Activated CD8-positive, alpha-beta T cell treated with anti-CD3 and anti-CD28 coated beads, Interleukin-2, amount 10 ng/mL, durations not matched to agents 7 days and 5 days (primary cell): ENCODE measurements at regions of chr4 and their contacts with region 1.

Region 1: DNA sequence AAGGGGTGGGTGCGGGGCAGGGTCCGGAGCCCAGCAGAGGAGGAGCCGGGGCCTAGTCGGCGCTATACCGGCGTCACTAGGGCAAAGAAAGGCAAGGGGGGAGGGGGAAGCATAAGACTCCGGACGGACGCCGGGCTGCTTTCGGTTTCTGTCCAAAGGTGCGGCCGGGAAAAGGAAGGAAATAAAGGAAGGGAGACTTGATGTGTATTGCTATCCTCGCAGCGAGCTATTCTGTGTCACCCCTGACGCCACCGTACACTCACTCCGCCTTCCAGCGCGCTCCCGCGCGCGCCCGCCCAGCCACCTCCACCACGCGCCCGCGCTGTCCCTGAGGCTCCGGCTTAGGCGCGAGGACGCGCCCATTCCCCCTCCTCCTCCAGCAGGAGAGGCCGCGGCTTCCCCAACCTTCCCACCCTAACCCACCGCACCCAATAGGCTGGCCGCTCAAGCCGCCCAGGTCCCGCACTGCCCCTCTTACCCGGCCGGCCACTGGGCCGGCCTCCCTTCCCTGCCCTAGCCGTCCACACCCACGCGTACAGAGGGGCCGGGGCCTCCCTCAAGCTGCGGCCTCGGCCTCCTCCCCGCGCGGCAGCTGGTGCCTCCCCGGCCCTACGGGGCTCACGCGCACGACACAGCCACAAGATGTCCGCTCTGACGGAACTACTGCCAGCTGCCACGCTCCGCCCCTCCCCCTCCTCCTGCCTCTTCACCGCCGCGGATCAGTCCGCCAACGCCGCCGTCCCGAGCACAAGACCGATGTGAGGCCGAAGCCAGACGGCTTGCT is at the start of gene UBE2D3:
- DNase-seq: peak; percentile 96
- ATAC-seq: peak; percentile 54
- H3K4me3 Mint-ChIP-seq: no peak within 1 kb of the TSS
- H3K27ac Mint-ChIP-seq: no peak within 1 kb of the TSS
- H3K4me1 Mint-ChIP-seq: peaks cover 34% of the 10 kb centered on the region
- H3K27me3 Mint-ChIP-seq: no peaks in the 10 kb centered on the region
- total RNA-seq, gene UBE2D3: 388 to 409 TPM

Region 2: DNA sequence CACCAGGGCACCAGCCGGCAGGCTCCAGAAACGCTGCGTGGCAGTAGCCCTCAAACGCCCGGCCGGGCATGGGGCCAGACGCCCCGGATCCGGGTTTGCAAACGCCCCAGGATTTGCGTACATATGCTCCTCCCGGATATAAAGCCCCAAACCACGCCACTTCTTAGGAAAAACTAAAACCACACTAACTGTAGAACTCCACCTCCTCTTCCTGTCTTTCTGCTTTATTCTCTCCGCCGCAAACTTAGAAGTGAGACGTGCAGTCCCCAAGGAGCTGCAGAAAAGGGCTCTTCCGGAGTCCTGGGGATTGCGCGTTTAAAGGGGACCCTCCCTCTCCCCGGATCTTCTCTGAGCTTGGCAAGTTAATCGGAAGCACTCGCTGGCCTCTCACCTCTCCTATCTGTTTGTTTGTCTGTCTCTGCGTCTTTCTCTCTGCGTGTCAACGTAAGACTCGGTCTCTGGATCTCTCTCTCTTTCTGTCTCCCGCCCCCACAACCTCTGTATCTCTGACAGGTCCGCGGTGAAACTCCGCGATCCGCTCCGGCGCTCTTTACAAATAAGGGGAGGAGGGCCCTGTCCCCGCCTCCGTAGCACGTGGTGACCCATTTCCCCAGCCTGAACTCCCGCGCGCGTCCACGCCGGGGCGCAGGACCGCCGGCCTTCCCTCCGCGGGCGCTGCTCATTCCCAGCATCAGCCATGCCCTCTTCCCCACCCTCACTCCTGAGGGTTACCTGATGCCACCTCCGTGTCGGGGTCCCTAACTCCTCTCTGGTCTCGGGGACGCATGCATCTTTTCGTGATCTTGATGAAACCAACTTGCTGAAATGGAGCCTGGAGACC is 481.9 kb before region 1 on chr4 and contains the start of gene SLC39A8:
- CTCF ChIA-PET with region 1: interaction called, 9 read pairs
- POLR2A ChIA-PET with region 1: interaction called, 18 read pairs
- DNase-seq: peak; percentile 95
- ATAC-seq: peak; percentile 84
- H3K4me3 Mint-ChIP-seq: peak within 1 kb of the TSS; percentile 82
- H3K27ac Mint-ChIP-seq: peak within 1 kb of the TSS; percentile 96
- H3K4me1 Mint-ChIP-seq: peaks cover 40% of the 10 kb centered on the region
- H3K27me3 Mint-ChIP-seq: peaks cover 7% of the 10 kb centered on the region
- total RNA-seq, gene SLC39A8: 79.6 to 83.0 TPM

Region 3: GRCh38 chr4:102809190-102809589 is 17.9 kb before region 1 on chr4:
- CTCF ChIA-PET with region 1: interaction called, 9 read pairs
- POLR2A ChIA-PET with region 1: interaction called, 33 read pairs
- DNase-seq: no peak
- ATAC-seq: peak; percentile 64
- H3K4me3 Mint-ChIP-seq: no peak overlapping the region
- H3K27ac Mint-ChIP-seq: peak overlapping the region; percentile 69
- H3K4me1 Mint-ChIP-seq: peaks cover 60% of the 10 kb centered on the region
- H3K27me3 Mint-ChIP-seq: no peaks in the 10 kb centered on the region

Region 4: DNA sequence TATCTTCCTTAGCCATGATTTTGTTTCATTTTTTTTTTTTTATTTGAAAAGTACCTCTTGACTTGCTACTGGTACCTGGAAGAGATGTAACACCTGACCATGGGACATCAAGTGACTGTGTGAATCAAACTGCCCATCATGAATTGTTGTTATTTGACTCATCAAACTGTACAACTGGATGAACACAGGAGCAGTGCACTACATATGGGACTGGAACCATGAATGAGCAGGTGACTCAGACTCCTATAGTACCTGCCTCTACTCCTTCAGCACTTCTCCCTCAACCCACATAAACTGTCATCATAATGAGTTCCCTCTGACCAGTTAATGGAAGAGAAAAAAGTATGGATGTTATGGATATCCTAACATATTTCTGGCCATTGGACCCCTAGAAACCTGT is 16.2 kb after region 1 on chr4:
- CTCF ChIA-PET with region 1: interaction called, 4 read pairs
- POLR2A ChIA-PET with region 1: interaction called, 10 read pairs
- DNase-seq: no peak
- ATAC-seq: no peak
- H3K4me3 Mint-ChIP-seq: no peak overlapping the region
- H3K27ac Mint-ChIP-seq: no peak overlapping the region
- H3K4me1 Mint-ChIP-seq: peaks cover 7% of the 10 kb centered on the region
- H3K27me3 Mint-ChIP-seq: no peaks in the 10 kb centered on the region

Region 5: GRCh38 chr4:103019308-103020124 is 192.4 kb after region 1 on chr4 and contains the start of gene SLC9B1:
- CTCF ChIA-PET with region 1: interaction called, 7 read pairs
- POLR2A ChIA-PET with region 1: interaction called, 18 read pairs
- DNase-seq: peak; percentile 96
- ATAC-seq: peak; percentile 99
- H3K4me3 Mint-ChIP-seq: peak within 1 kb of the TSS; percentile 84
- H3K27ac Mint-ChIP-seq: peak within 1 kb of the TSS; percentile 96
- H3K4me1 Mint-ChIP-seq: peaks cover 19% of the 10 kb centered on the region
- H3K27me3 Mint-ChIP-seq: no peaks in the 10 kb centered on the region
- total RNA-seq, gene SLC9B1: 0.83 to 1.3 TPM